ENCODE measurements at regions of chr1 and their contacts with region 1.

Region 1: DNA sequence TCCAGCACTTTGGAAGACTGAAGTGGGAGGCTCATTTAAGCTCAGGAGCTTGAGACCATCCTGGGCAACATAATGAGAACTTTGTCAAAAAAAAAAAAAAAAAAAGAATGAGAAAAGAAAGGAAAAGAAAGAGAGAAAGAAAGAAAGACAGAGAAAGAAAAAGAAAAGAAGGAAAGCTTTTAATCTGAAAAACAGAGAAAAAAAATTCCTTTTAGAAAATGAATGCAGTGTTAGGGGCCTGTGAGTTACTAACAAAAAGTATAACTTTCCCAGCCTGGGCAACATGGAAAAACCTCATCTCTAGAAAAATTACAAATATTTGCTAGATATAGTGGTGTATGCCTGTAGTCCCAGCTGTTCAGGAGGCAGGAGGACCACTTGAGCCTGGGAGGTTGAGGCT is 15.9 kb upstream of the SYDE2 start:
- DNase-seq: no peak
- H3K4me3 ChIP-seq: no peak overlapping the region
- H3K27ac ChIP-seq: no peak overlapping the region
- H3K4me1 ChIP-seq: no peaks in the 10 kb centered on the region
- H3K27me3 ChIP-seq: no peaks in the 10 kb centered on the region
- CTCF ChIP-seq: no peak

Region 2: GRCh38 chr1:85607126-85607912 is 390.6 kb after region 1 on chr1:
- CTCF ChIA-PET with region 1: no interaction called
- POLR2A ChIA-PET with region 1: interaction called, 21 read pairs
- intact Hi-C with region 1: no loop called
- DNase-seq: peak; percentile 78
- H3K4me3 ChIP-seq: no peak overlapping the region
- H3K27ac ChIP-seq: no peak overlapping the region
- H3K4me1 ChIP-seq: peaks cover 11% of the 10 kb centered on the region
- H3K27me3 ChIP-seq: no peaks in the 10 kb centered on the region
- CTCF ChIP-seq: no peak